ENCODE measurements at regions of chrX and their contacts with region 1.

Region 1: DNA sequence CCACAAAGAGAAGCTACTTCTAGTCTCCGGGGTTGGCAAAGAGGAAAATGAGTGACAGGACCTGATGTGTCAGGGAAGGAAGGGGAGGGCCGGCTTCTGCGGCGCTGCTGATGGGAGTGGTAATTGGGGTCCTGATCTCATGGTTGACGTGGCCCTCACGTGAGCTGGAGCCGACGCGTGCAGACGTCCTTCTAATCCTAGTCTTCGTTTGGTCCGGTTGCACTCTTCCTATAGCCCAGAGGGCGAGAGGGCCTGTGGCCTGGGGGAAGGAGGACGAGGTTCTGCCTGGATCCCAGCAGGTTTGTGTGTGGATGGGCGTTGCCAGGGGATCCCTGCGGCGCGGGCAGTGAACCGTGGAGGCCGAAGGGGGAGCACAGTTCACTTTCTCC is at the start of gene ARMCX1:
- DNase-seq: peak; percentile 62 to 87
- H3K4me3 ChIP-seq: peak within 1 kb of the TSS; percentile 35 to 78
- H3K27ac ChIP-seq: peak within 1 kb of the TSS; percentile 85 to 93
- H3K4me1 ChIP-seq: no peaks in the 10 kb centered on the region
- H3K27me3 ChIP-seq: no peaks in the 10 kb centered on the region
- CTCF ChIP-seq: no peak
- total RNA-seq, gene ARMCX1: 9.2 TPM

Region 2: GRCh38 chrX:101407748-101408531 is 142.4 kb before region 1 on chrX and contains the starts of genes GLA and HNRNPH2:
- intact Hi-C with region 1: loop called (anchors 2 kb)
- DNase-seq: peak; percentile 84 to 96
- H3K4me3 ChIP-seq: peak within 1 kb of the TSS; percentile 68 to 81
- H3K27ac ChIP-seq: peak within 1 kb of the TSS; percentile 92 to 93
- H3K4me1 ChIP-seq: peaks cover 0 to 3% of the 10 kb centered on the region in 2 donors
- H3K27me3 ChIP-seq: no peaks in the 10 kb centered on the region
- CTCF ChIP-seq: no peak
- total RNA-seq, gene GLA: 9.0 TPM
- total RNA-seq, gene HNRNPH2: 21.4 TPM

Region 3: DNA sequence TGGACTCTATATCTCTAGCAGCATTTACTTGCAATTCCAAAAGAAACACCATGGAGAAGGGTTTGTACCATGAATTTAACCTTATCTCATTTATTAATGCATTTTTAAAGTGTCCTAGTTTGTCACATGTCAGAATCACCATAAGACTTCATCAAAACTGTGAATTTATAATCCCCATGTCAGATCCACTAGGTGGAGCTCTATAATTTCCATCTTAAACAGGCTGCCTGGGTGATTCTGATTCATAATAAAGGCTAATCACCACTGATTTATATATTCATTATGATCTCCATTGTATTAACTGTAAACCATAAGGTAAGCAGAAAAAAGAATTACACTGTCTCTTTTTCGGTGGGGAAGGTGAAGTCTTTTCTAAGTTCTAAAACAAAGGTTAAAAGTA is 579.1 kb after region 1 on chrX:
- intact Hi-C with region 1: loop called (anchors 5 kb)
- DNase-seq: no peak
- H3K4me3 ChIP-seq: no peak overlapping the region
- H3K27ac ChIP-seq: no peak overlapping the region
- H3K4me1 ChIP-seq: no peaks in the 10 kb centered on the region
- H3K27me3 ChIP-seq: no peaks in the 10 kb centered on the region
- CTCF ChIP-seq: peak in 2 of 3 experiments; percentile 26 to 37